AG04450 (cell line): ENCODE measurements at regions of chr11 and their contacts with region 1.

Region 1: DNA sequence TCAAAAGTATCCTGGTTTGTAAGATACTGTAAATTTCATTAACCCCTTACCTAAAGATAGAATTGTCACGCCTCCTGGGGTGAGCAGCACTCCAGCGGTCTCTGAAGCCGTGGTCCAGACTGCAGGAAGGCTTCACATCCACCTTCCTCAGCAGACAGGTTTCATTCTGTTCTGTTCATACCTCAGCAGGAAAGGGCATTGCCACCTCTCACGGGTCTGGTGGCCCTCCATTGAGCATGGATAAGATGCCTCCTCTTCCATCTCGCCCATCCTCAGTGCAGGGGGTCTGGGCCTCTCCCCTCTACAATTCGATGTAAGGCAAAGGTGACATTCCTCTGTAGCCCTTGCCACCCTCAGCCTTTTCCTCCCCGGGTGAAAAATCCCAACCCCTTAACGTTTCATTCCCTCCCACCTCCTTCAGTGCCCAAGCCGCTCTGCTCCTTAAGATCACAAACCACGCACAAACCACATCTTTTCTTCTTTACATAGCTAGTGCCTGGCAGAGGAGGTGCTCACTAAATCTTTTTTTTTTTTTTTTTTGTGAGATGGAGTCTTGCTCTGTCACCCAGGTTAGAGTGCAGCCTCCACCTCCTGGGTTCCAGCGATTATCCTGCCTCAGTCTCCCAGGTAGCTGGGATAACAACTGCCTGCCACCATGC is 28.5 kb downstream of the RPUSD4 start:
- DNase-seq: no peak
- H3K4me3 ChIP-seq: no peak overlapping the region
- H3K27ac ChIP-seq: peak overlapping the region; percentile 11
- H3K27me3 ChIP-seq: no peaks in the 10 kb centered on the region
- CTCF ChIP-seq: no peak

Region 2: GRCh38 chr11:125999234-125999880 is 183.6 kb before region 1 on chr11:
- CTCF ChIA-PET with region 1: no interaction called
- POLR2A ChIA-PET with region 1: no interaction called
- DNase-seq: no peak
- H3K4me3 ChIP-seq: no peak overlapping the region
- H3K27ac ChIP-seq: no peak overlapping the region
- H3K27me3 ChIP-seq: peaks cover 2% of the 10 kb centered on the region
- CTCF ChIP-seq: no peak

Region 3: DNA sequence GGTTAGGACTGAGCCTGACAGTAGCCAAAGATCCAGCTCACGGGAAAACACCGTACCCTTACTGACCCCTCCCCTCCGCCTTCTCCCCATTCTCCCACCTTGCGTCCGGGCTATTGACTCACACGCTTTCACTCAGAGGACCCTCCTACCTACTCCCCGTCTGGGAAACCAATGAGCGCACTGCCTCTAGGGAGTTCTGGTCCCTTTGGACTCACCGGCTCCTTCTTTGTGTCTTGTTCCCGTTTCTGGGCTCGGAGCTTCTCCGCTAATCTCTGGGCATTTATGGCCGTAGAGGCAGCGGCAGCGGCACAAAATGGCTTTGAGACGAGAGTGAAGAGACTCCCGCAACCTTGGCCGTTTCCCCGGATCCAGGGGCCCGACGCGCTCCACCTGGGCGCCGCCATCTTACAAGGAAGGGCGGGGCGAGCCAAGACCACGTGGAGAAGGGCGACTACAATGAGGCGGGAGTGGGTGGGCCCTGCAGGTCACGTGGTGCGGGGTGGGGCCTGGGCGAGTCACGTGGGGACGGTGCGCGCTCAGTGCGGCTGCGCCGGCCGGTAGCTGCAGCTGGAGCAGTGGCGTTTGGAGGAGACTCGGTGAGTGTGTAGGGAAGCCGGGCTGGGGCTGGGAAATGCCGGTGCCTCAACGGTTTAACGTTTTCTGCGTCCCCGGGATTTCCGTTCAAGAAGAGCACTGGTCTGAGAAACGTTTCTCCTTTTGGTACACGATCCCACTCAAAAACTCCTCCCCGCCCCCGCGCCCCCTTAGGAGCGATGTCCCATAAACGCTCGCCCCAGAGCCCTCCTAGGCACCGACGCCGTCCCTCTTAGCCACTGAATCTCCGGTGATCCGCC is 28.5 kb after region 1 on chr11 and contains the starts of genes FAM118B and RPUSD4:
- CTCF ChIA-PET with region 1: no interaction called
- POLR2A ChIA-PET with region 1: interaction called, 11 read pairs
- DNase-seq: peak; percentile 88
- H3K4me3 ChIP-seq: peak within 1 kb of the TSS; percentile 94
- H3K27ac ChIP-seq: peak within 1 kb of the TSS; percentile 42
- H3K27me3 ChIP-seq: no peaks in the 10 kb centered on the region
- CTCF ChIP-seq: no peak
- polyA plus RNA-seq, gene FAM118B: 29.5 and 36.7 TPM in 2 replicates
- polyA plus RNA-seq, gene RPUSD4: 22.0 and 24.9 TPM in 2 replicates